ENCODE measurements at regions of chr1 and their contacts with region 1.

Region 1: GRCh38 chr1:44594871-44595746 is 79.2 kb downstream of the TMEM53 start:
- DNase-seq: peak; percentile 84 to 98 (median 96)
- ATAC-seq: peak; percentile 99
- H3K4me3 ChIP-seq: no peak overlapping the region
- H3K27ac ChIP-seq: no peak overlapping the region
- H3K4me1 ChIP-seq: peaks cover 0 to 9% of the 10 kb centered on the region in 2 experiments; a peak in 2 of 5 replicates
- H3K27me3 ChIP-seq: peaks cover 33 to 61% of the 10 kb centered on the region in 2 experiments
- CTCF ChIP-seq: peak; percentile 96 to 98 (median 97)
- EP300 ChIP-seq: no peak
- POLR2A ChIP-seq: no peak
- RAD21 ChIP-seq: peak; percentile 88 to 97

Region 2: DNA sequence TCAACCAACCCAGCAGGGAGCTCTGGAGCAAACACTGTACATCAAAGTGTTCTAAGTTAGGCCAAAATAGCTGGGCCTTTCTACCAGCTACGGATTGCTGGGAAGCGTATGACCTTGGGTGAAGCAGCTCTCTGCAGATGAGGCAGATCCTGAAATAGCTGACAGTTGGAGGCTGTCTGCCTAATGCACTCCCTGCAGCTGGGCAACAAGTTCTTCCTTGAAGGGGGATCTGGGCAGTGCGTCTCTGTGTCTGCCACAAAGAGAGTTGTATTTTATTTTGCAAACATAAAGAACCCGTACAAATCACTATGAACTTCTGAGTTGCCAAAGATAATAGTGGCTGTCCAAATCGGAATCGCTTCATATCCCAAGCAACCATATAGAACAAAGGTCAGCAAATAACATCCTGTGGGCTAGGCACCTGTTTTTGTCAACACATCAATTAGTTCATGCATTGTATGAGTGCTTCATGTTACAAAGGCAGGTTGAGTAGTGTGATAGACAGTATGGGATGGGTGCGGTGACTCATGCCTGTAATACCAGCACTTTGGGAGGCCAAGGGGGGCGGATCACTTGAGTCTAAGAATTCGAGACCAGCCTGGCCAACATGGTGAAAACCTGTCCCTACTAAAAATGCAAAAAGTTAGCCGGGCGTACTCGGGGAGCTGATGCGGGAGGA is 505.6 kb before region 1 on chr1:
- CTCF ChIA-PET with region 1: interaction called, 3 read pairs
- POLR2A ChIA-PET with region 1: no interaction called
- in situ Hi-C with region 1: no loop called
- intact Hi-C with region 1: loop called (anchors 5 kb)
- DNase-seq: peak in 1 of 4 experiments; percentile 46
- ATAC-seq: peak; percentile 56
- H3K4me3 ChIP-seq: no peak overlapping the region
- H3K27ac ChIP-seq: no peak overlapping the region
- H3K4me1 ChIP-seq: peaks cover 3 to 19% of the 10 kb centered on the region in 2 experiments; a peak in 3 of 5 replicates
- H3K27me3 ChIP-seq: no peaks in the 10 kb centered on the region; a peak in 1 of 5 replicates
- CTCF ChIP-seq: no peak
- EP300 ChIP-seq: no peak
- POLR2A ChIP-seq: no peak
- RAD21 ChIP-seq: no peak

Region 3: GRCh38 chr1:44213222-44214112 is 381.6 kb before region 1 on chr1 and contains the start of gene DMAP1:
- CTCF ChIA-PET with region 1: interaction called, 8 read pairs
- POLR2A ChIA-PET with region 1: no interaction called
- in situ Hi-C with region 1: no loop called
- intact Hi-C with region 1: loop called (anchors 1 kb)
- DNase-seq: peak; percentile 84 to 92 (median 90)
- ATAC-seq: peak; percentile 93
- H3K4me3 ChIP-seq: peak within 1 kb of the TSS; percentile 55
- H3K27ac ChIP-seq: peak within 1 kb of the TSS; percentile 53; the same call in 2 of the 3 replicates
- H3K4me1 ChIP-seq: peaks cover 7 to 10% of the 10 kb centered on the region in 2 experiments; a peak in 4 of 5 replicates
- H3K27me3 ChIP-seq: 0 out of 5 replicates have a peak, but pooled peaks cover 0 to 1% of the 10 kb centered on the region in 2 experiments
- CTCF ChIP-seq: peak in 2 of 3 experiments; percentile 28 to 39; a peak in 4 of 6 replicates
- EP300 ChIP-seq: peak; percentile 27; the same call in 1 of the 2 replicates
- POLR2A ChIP-seq: peak; percentile 77
- RAD21 ChIP-seq: peak; percentile 41 to 56; a peak in 3 of 4 replicates
- polyA plus RNA-seq, gene DMAP1: 1.5 to 4.0 TPM

Region 4: DNA sequence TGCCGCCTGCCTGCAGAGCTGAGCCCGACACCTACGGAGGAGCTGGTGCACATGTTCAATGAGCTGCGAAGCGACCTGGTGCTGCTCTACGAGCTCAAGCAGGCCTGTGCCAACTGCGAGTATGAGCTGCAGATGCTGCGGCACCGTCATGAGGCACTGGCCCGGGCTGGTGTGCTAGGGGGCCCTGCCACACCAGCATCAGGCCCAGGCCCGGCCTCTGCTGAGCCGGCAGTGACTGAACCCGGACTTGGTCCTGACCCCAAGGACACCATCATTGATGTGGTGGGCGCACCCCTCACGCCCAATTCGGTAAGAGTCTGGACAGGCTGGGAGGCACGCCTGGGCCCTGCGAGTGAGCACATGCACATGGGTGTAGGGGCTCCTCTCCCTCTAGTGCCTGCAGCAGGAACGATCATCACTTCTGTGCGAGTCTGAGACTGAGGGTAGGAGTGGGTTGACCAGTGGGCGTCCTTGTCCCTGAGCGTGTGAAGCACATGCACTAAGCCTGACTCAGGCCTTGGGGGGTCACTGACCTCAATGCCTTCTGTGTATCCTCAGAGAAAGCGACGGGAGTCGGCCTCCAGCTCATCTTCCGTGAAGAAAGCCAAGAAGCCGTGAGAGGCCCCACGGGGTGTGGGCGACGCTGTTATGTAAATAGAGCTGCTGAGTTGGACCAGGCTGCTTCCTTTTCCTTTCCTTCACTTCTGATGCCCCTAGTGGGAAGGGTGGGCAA is 374.9 kb before region 1 on chr1:
- CTCF ChIA-PET with region 1: interaction called, 8 read pairs
- POLR2A ChIA-PET with region 1: no interaction called
- in situ Hi-C with region 1: loop called (anchors 10 kb)
- intact Hi-C with region 1: loop called (anchors 1 kb)
- DNase-seq: no peak
- ATAC-seq: no peak
- H3K4me3 ChIP-seq: no peak overlapping the region
- H3K27ac ChIP-seq: no peak overlapping the region
- H3K4me1 ChIP-seq: peaks cover 0 to 5% of the 10 kb centered on the region in 2 experiments; a peak in 2 of 5 replicates
- H3K27me3 ChIP-seq: no peaks in the 10 kb centered on the region
- CTCF ChIP-seq: no peak
- EP300 ChIP-seq: no peak
- POLR2A ChIP-seq: no peak
- RAD21 ChIP-seq: no peak

Region 5: GRCh38 chr1:44294588-44295007 is 300.5 kb before region 1 on chr1:
- CTCF ChIA-PET with region 1: interaction called, 3 read pairs
- POLR2A ChIA-PET with region 1: no interaction called
- in situ Hi-C with region 1: no loop called
- intact Hi-C with region 1: loop called (anchors 10 kb)
- DNase-seq: peak; percentile 68 to 79 (median 74)
- ATAC-seq: peak; percentile 90
- H3K4me3 ChIP-seq: no peak overlapping the region
- H3K27ac ChIP-seq: no peak overlapping the region
- H3K4me1 ChIP-seq: peaks cover 28 to 36% of the 10 kb centered on the region in 2 experiments
- H3K27me3 ChIP-seq: no peaks in the 10 kb centered on the region
- CTCF ChIP-seq: peak; percentile 93 to 99 (median 99)
- EP300 ChIP-seq: no peak
- POLR2A ChIP-seq: no peak
- RAD21 ChIP-seq: peak; percentile 80 to 97

Region 6: GRCh38 chr1:44377925-44378784 is 217.0 kb before region 1 on chr1:
- CTCF ChIA-PET with region 1: interaction called, 32 read pairs
- POLR2A ChIA-PET with region 1: interaction called, 6 read pairs
- in situ Hi-C with region 1: no loop called
- intact Hi-C with region 1: loop called (anchors 1 kb)
- DNase-seq: peak; percentile 60 to 74 (median 68)
- ATAC-seq: peak; percentile 89
- H3K4me3 ChIP-seq: no peak overlapping the region
- H3K27ac ChIP-seq: no peak overlapping the region
- H3K4me1 ChIP-seq: no peaks in the 10 kb centered on the region
- H3K27me3 ChIP-seq: peaks cover 4 to 26% of the 10 kb centered on the region in 2 experiments; a peak in 4 of 5 replicates
- CTCF ChIP-seq: peak; percentile 87 to 95 (median 87)
- EP300 ChIP-seq: no peak
- POLR2A ChIP-seq: no peak
- RAD21 ChIP-seq: peak; percentile 83 to 95

Region 7: GRCh38 chr1:44543064-44543744 is 51.9 kb before region 1 on chr1:
- CTCF ChIA-PET with region 1: no interaction called
- POLR2A ChIA-PET with region 1: no interaction called
- in situ Hi-C with region 1: no loop called
- intact Hi-C with region 1: loop called (anchors 5 kb)
- DNase-seq: peak in 2 of 4 experiments; percentile 65 to 68
- ATAC-seq: peak; percentile 59
- H3K4me3 ChIP-seq: no peak overlapping the region
- H3K27ac ChIP-seq: no peak overlapping the region
- H3K4me1 ChIP-seq: peaks cover 0 to 6% of the 10 kb centered on the region in 2 experiments; a peak in 1 of 5 replicates
- H3K27me3 ChIP-seq: peaks cover 56 to 64% of the 10 kb centered on the region in 2 experiments
- CTCF ChIP-seq: 0 out of 6 replicates have a peak, but pooled peaks of 1 of the 3 experiments have one; percentile 16
- EP300 ChIP-seq: no peak
- POLR2A ChIP-seq: no peak
- RAD21 ChIP-seq: no peak

Measured in K562 (cell line).